CD8-positive, alpha-beta T cell (primary cell): ENCODE measurements at regions of chr7 and their contacts with region 1.

Region 1: DNA sequence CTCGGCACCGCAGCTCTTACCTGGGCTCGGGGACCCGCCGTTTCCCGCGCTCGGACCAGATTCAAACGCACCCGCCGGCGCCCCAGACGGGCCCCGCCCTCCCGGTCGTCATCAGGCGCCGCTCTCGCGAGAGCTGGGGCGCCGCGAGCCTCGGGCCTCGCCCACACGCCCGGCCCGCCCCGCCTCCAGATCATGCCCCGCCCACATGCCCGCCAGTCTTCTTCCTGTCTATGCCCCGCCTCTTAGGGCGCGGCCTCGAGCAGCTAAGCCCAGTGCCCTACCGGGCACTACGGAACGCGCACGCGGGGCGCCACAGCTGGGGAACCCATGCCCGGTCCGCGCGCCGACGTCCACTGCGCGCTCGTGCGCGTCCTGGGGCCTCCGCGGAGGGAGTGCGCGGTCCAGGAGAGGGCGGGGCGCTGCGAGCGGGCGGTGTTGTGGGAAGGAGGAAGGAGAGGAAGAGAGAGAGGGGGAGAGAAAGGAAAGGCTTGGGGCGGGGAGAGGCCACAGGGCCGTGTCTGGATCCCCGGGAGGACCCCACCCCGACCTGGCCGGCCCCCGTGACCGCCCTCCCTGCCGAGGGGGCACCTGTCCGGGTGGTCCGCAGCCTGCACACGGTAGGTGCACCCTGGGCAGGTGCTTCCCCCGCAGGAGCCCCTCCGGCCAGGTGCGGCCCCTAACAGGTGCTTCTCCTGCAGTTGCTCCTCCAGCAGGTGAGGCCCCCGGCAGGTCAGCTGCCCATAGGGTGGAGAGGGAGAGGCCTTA is at the start of gene NCAPG2:
- DNase-seq: peak; percentile 95 to 99 (median 98)
- ATAC-seq: peak; percentile 99
- H3K4me3 ChIP-seq: peak within 1 kb of the TSS; percentile 68 to 86
- H3K4me3 Mint-ChIP-seq: peak within 1 kb of the TSS; percentile 89
- H3K27ac ChIP-seq: peak within 1 kb of the TSS; percentile 58 to 73
- H3K27ac Mint-ChIP-seq: peak within 1 kb of the TSS; percentile 83
- H3K4me1 ChIP-seq: peaks cover 5% of the 10 kb centered on the region
- H3K4me1 Mint-ChIP-seq: peaks cover 15% of the 10 kb centered on the region
- H3K27me3 ChIP-seq: no peaks in the 10 kb centered on the region
- H3K27me3 Mint-ChIP-seq: no peaks in the 10 kb centered on the region
- CTCF ChIP-seq: no peak
- total RNA-seq, gene NCAPG2: 3.2 to 4.5 TPM

Region 2: GRCh38 chr7:157138424-157139110 is 1566.3 kb before region 1 on chr7 and contains the start of gene UBE3C:
- CTCF ChIA-PET with region 1: no interaction called
- POLR2A ChIA-PET with region 1: no interaction called
- intact Hi-C with region 1: loop called (anchors 5 kb)
- DNase-seq: peak; percentile 81 to 97 (median 89)
- ATAC-seq: peak; percentile 85
- H3K4me3 ChIP-seq: peak within 1 kb of the TSS; percentile 57 to 59
- H3K4me3 Mint-ChIP-seq: peak within 1 kb of the TSS; percentile 84
- H3K27ac ChIP-seq: peak within 1 kb of the TSS; percentile 76 to 88
- H3K27ac Mint-ChIP-seq: peak within 1 kb of the TSS; percentile 94
- H3K4me1 ChIP-seq: peaks cover 38% of the 10 kb centered on the region
- H3K4me1 Mint-ChIP-seq: peaks cover 41% of the 10 kb centered on the region
- H3K27me3 ChIP-seq: no peaks in the 10 kb centered on the region
- H3K27me3 Mint-ChIP-seq: no peaks in the 10 kb centered on the region
- CTCF ChIP-seq: no peak
- total RNA-seq, gene UBE3C: 25.3 to 28.8 TPM

Region 3: DNA sequence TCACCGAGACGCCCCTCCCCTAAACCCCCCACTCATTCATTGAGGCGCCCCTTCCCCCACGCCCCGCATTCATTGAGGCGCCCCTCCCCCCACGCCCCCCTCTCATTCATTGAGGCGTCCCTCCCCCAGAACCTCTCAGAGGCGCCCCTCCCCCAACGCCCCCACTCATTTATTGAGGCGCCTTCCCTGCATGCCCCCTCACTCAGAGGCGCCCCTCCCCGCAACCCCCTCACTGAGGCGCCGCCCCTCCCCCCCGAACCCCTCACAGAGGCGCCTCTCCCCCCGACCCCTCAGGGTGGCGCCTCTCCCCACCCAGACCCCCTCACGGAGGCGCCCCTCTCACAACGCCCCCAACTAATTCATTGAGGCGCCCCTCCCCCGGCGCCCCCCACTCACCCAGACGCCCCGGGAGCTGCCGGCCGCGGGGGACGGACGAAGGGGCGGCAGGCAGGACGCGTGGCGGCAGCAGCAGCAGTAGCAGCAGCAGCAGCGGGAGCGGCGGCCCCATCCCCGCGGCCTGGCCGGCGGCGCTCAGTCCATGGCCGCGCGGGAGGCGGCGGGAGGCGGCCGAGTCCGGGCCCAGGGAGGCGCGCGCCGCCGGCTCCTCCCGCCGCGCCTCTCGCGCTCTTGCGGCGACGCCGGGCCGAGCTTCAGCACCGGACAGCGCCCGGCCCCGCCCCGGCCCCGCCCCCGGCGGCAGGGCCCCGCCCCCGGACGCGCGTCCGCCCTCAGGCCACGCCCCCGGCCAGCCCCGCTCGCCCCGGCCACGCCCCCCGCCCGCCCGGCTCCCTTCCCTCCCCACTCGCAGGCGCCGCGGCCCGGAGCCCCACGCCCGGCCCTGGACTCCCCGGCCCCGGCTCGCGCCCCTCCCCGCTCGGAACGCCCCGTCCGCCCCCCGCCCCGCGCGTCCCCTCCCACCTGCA is 117.5 kb before region 1 on chr7 and contains the start of gene PTPRN2:
- CTCF ChIA-PET with region 1: no interaction called
- POLR2A ChIA-PET with region 1: no interaction called
- intact Hi-C with region 1: loop called in 1 of 2 experiments (anchors 2 kb)
- DNase-seq: peak; percentile 10 to 69 (median 51)
- ATAC-seq: peak; percentile 96
- H3K4me3 ChIP-seq: no peak within 1 kb of the TSS
- H3K4me3 Mint-ChIP-seq: peak within 1 kb of the TSS; percentile 47
- H3K27ac ChIP-seq: no peak within 1 kb of the TSS
- H3K27ac Mint-ChIP-seq: no peak within 1 kb of the TSS
- H3K4me1 ChIP-seq: peaks cover 9% of the 10 kb centered on the region
- H3K4me1 Mint-ChIP-seq: peaks cover 10% of the 10 kb centered on the region
- H3K27me3 ChIP-seq: peaks cover 8 to 35% of the 10 kb centered on the region in 2 experiments
- H3K27me3 Mint-ChIP-seq: peaks cover 49% of the 10 kb centered on the region
- CTCF ChIP-seq: no peak
- total RNA-seq, gene PTPRN2: 0.14 to 0.22 TPM

Region 4: GRCh38 chr7:158716802-158717201 is 11.9 kb after region 1 on chr7:
- CTCF ChIA-PET with region 1: interaction called, 10 read pairs
- POLR2A ChIA-PET with region 1: no interaction called
- intact Hi-C with region 1: no loop called
- DNase-seq: no peak
- ATAC-seq: no peak
- H3K4me3 ChIP-seq: no peak overlapping the region
- H3K4me3 Mint-ChIP-seq: no peak overlapping the region
- H3K27ac ChIP-seq: no peak overlapping the region
- H3K27ac Mint-ChIP-seq: no peak overlapping the region
- H3K4me1 ChIP-seq: no peaks in the 10 kb centered on the region
- H3K4me1 Mint-ChIP-seq: peaks cover 5% of the 10 kb centered on the region
- H3K27me3 ChIP-seq: peaks cover 0 to 8% of the 10 kb centered on the region in 2 experiments
- H3K27me3 Mint-ChIP-seq: peaks cover 9% of the 10 kb centered on the region
- CTCF ChIP-seq: no peak

Region 5: GRCh38 chr7:158760936-158761335 is 56.0 kb after region 1 on chr7:
- CTCF ChIA-PET with region 1: no interaction called
- POLR2A ChIA-PET with region 1: no interaction called
- intact Hi-C with region 1: no loop called
- DNase-seq: peak in 3 of 9 experiments; percentile 30 to 51 (median 39)
- ATAC-seq: peak; percentile 61
- H3K4me3 ChIP-seq: no peak overlapping the region
- H3K4me3 Mint-ChIP-seq: no peak overlapping the region
- H3K27ac ChIP-seq: no peak overlapping the region
- H3K27ac Mint-ChIP-seq: peak overlapping the region; percentile 60
- H3K4me1 ChIP-seq: no peaks in the 10 kb centered on the region
- H3K4me1 Mint-ChIP-seq: peaks cover 6% of the 10 kb centered on the region
- H3K27me3 ChIP-seq: no peaks in the 10 kb centered on the region
- H3K27me3 Mint-ChIP-seq: no peaks in the 10 kb centered on the region
- CTCF ChIP-seq: peak; percentile 17

Region 6: DNA sequence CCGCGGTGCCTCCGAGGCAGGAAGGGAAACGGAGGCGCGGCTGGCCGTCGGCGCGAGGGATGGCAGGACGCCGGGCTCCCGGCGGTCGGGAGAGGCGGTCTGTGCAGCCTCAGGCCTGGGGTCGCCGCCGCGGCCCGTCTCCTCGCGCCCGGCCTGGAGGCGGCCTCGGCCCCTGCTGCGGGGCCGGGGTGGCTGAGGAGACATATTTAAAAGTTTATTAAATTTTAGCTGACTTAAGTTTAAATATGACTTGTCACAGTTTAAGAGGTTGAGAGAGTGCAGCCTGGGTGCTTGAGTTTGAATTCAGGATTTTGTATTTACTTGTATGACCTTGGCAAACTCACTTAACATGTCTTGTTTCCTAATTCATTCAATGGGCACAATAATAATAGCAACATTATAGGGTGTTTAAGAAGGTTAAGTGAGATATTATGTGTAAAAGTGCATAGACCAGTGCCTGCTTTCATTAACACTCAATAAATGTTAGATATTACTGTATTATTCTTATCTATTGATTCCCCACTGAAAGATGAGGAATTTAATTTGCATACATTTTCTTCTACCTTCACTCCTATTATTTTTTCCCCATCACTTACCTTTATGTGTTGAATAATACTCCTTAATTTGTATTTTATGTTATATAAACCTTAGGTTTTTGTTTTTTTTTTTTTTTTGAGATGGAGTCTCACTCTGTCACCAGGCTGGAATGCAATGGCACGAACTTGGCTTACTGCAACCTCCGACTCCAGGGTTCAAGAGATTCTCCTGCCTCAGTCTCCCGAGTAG is 152.2 kb after region 1 on chr7:
- CTCF ChIA-PET with region 1: no interaction called
- POLR2A ChIA-PET with region 1: interaction called, 3 read pairs
- intact Hi-C with region 1: loop called (anchors 1 kb)
- DNase-seq: no peak
- ATAC-seq: no peak
- H3K4me3 ChIP-seq: peak overlapping the region; percentile 61 to 64
- H3K4me3 Mint-ChIP-seq: peak overlapping the region; percentile 96
- H3K27ac ChIP-seq: peak overlapping the region; percentile 17 to 68
- H3K27ac Mint-ChIP-seq: peak overlapping the region; percentile 80
- H3K4me1 ChIP-seq: peaks cover 10% of the 10 kb centered on the region
- H3K4me1 Mint-ChIP-seq: peaks cover 31% of the 10 kb centered on the region
- H3K27me3 ChIP-seq: no peaks in the 10 kb centered on the region
- H3K27me3 Mint-ChIP-seq: no peaks in the 10 kb centered on the region
- CTCF ChIP-seq: no peak